OCI-LY7 (cell line): ENCODE measurements at regions of chr7 and their contacts with region 1.

Region 1: GRCh38 chr7:51162724-51163329 is 153.8 kb downstream of the COBL start:
- DNase-seq: peak; percentile 63
- H3K4me3 ChIP-seq: no peak overlapping the region
- H3K27ac ChIP-seq: no peak overlapping the region
- H3K4me1 ChIP-seq: no peaks in the 10 kb centered on the region
- CTCF ChIP-seq: peak; percentile 92

Region 2: GRCh38 chr7:50092579-50093491 is 1070.0 kb before region 1 on chr7 and contains the start of gene ZPBP:
- CTCF ChIA-PET with region 1: interaction called, 4 read pairs
- POLR2A ChIA-PET with region 1: no interaction called
- intact Hi-C with region 1: loop called (anchors 5 kb)
- DNase-seq: peak; percentile 69
- H3K4me3 ChIP-seq: no peak within 1 kb of the TSS
- H3K27ac ChIP-seq: no peak within 1 kb of the TSS
- H3K4me1 ChIP-seq: peaks cover 5% of the 10 kb centered on the region
- CTCF ChIP-seq: peak; percentile 99
- total RNA-seq, gene ZPBP: not detected in 2 replicates

Region 3: GRCh38 chr7:51102828-51103227 is 60.0 kb before region 1 on chr7:
- CTCF ChIA-PET with region 1: no interaction called
- POLR2A ChIA-PET with region 1: no interaction called
- intact Hi-C with region 1: no loop called
- DNase-seq: no peak
- H3K4me3 ChIP-seq: no peak overlapping the region
- H3K27ac ChIP-seq: no peak overlapping the region
- H3K4me1 ChIP-seq: no peaks in the 10 kb centered on the region
- CTCF ChIP-seq: no peak

Region 4: DNA sequence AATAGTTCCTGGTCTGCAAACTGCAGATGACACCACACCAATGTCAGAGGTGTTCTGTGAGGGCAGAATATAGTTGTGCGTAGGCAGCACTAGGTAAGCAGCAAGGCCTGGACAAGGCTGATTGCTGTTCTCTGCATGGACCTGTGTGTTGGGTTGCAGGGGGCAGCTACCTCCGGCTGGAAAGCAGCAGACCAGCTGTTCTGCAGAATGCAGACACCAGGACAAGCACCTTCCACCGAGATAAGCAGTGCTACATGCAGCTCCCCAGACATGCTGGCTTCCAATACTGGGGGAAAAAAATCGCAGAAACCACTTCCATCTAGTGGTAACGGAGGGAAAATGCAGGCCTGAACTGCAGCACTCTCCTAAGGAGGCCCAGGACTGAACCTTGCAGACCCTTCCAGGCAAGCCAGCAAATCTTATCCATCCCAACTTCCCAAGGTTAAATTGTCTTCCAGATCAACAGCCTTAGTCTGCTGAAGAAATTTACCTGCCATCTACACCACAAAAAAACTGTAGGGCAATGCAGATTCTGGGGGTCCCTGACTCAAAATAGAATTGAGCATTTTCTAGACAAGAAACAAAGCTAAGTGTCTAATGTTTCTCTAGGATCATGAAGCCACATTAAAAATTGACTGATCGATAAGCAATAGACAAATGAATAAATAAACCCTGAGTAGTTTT is 204.2 kb after region 1 on chr7:
- CTCF ChIA-PET with region 1: interaction called, 3 read pairs
- POLR2A ChIA-PET with region 1: no interaction called
- intact Hi-C with region 1: loop called (anchors 2 kb)
- DNase-seq: peak; percentile 25
- H3K4me3 ChIP-seq: no peak overlapping the region
- H3K27ac ChIP-seq: no peak overlapping the region
- H3K4me1 ChIP-seq: no peaks in the 10 kb centered on the region
- CTCF ChIP-seq: peak; percentile 70

Region 5: GRCh38 chr7:51430480-51431086 is 267.8 kb after region 1 on chr7:
- CTCF ChIA-PET with region 1: no interaction called
- POLR2A ChIA-PET with region 1: no interaction called
- intact Hi-C with region 1: loop called (anchors 5 kb)
- DNase-seq: peak; percentile 58
- H3K4me3 ChIP-seq: no peak overlapping the region
- H3K27ac ChIP-seq: no peak overlapping the region
- H3K4me1 ChIP-seq: no peaks in the 10 kb centered on the region
- CTCF ChIP-seq: peak; percentile 90